ENCODE measurements at regions of chr12 and their contacts with region 1.

Region 1: GRCh38 chr12:92408072-92408900 is 262.6 kb upstream of the BTG1 start:
- DNase-seq: peak; percentile 74
- ATAC-seq: peak; percentile 24
- H3K4me3 Mint-ChIP-seq: no peak overlapping the region
- H3K27ac Mint-ChIP-seq: no peak overlapping the region
- H3K4me1 Mint-ChIP-seq: peaks cover 46% of the 10 kb centered on the region
- H3K27me3 Mint-ChIP-seq: no peaks in the 10 kb centered on the region

Region 2: DNA sequence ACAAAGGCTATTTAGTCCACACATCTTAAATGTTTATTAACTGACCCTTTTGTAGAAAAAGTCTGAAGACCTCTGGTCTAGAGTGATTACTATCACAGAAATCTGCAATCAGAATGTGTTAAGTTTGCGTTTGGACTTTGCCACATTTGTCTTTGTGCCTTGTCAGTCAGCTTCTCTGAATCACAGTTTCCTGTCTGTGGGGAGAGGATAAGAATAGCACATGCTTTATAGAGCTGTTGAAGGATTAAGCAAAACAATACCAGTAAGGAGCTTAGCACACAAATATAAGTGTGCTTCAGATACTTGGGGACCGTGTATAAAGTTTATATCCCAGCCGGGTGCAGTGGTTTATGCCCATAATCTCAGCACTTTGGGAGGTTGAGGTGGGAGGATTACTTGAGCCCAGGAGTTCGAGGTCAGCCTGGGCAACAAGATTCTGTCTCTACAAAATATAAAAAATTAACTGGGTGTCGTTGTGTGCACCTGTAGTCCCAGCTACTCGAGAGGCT is 199.6 kb before region 1 on chr12:
- CTCF ChIA-PET with region 1: interaction called, 21 read pairs
- POLR2A ChIA-PET with region 1: interaction called, 5 read pairs
- DNase-seq: peak; percentile 60
- ATAC-seq: peak; percentile 89
- H3K4me3 Mint-ChIP-seq: peak overlapping the region; percentile 51
- H3K27ac Mint-ChIP-seq: peak overlapping the region; percentile 93
- H3K4me1 Mint-ChIP-seq: peaks cover 41% of the 10 kb centered on the region
- H3K27me3 Mint-ChIP-seq: no peaks in the 10 kb centered on the region

Region 3: GRCh38 chr12:92363295-92364146 is 44.8 kb before region 1 on chr12:
- CTCF ChIA-PET with region 1: interaction called, 13 read pairs
- POLR2A ChIA-PET with region 1: interaction called, 25 read pairs
- DNase-seq: peak; percentile 52
- ATAC-seq: peak; percentile 78
- H3K4me3 Mint-ChIP-seq: peak overlapping the region; percentile 72
- H3K27ac Mint-ChIP-seq: peak overlapping the region; percentile 84
- H3K4me1 Mint-ChIP-seq: peaks cover 48% of the 10 kb centered on the region
- H3K27me3 Mint-ChIP-seq: no peaks in the 10 kb centered on the region

Region 4: DNA sequence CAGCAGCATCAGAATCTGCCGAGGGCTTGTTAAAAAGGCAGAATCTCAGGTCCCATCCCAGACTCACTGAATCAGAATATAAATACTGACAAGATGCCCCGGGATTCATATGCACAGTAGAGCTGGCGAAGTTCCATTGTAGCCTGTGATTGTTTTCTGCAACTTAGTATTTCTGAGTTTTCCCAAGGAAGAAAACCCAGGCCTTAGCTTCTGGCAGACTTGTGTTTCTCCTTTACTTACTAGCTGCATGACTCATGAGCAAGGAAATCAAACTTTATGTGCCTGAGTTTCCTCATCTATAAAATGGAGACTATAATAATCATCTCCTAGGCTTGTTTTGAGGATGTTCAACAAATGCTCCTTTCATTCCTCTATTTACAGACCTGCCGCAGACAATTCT is 16.1 kb after region 1 on chr12:
- CTCF ChIA-PET with region 1: interaction called, 10 read pairs
- POLR2A ChIA-PET with region 1: no interaction called
- DNase-seq: no peak
- ATAC-seq: no peak
- H3K4me3 Mint-ChIP-seq: no peak overlapping the region
- H3K27ac Mint-ChIP-seq: no peak overlapping the region
- H3K4me1 Mint-ChIP-seq: peaks cover 3% of the 10 kb centered on the region
- H3K27me3 Mint-ChIP-seq: no peaks in the 10 kb centered on the region

Region 5: GRCh38 chr12:92505254-92506231 is 97.3 kb after region 1 on chr12:
- CTCF ChIA-PET with region 1: interaction called, 32 read pairs
- POLR2A ChIA-PET with region 1: interaction called, 6 read pairs
- DNase-seq: peak; percentile 56
- ATAC-seq: peak; percentile 70
- H3K4me3 Mint-ChIP-seq: peak overlapping the region; percentile 69
- H3K27ac Mint-ChIP-seq: peak overlapping the region; percentile 92
- H3K4me1 Mint-ChIP-seq: peaks cover 44% of the 10 kb centered on the region
- H3K27me3 Mint-ChIP-seq: no peaks in the 10 kb centered on the region

Region 6: DNA sequence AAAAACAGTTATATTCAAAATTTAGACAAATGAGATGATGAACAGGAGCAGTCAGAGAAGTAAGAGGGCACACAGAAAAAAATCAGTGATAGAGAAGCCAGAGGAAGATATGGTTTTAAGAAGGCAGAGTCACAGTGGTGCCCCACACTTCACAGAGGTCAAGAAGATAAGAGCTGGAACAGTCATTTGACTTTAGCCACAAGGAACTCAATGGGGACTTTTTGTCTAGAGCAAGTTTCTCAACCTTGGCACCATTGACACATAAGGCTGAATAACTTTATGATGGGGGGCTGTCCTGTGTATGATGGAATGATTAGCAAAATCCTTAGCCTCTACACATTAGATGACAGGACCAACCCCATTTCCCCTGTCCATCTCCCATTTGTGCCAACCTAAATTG is 121.7 kb after region 1 on chr12:
- CTCF ChIA-PET with region 1: no interaction called
- POLR2A ChIA-PET with region 1: no interaction called
- DNase-seq: no peak
- ATAC-seq: no peak
- H3K4me3 Mint-ChIP-seq: no peak overlapping the region
- H3K27ac Mint-ChIP-seq: no peak overlapping the region
- H3K4me1 Mint-ChIP-seq: peaks cover 10% of the 10 kb centered on the region
- H3K27me3 Mint-ChIP-seq: no peaks in the 10 kb centered on the region

Region 7: DNA sequence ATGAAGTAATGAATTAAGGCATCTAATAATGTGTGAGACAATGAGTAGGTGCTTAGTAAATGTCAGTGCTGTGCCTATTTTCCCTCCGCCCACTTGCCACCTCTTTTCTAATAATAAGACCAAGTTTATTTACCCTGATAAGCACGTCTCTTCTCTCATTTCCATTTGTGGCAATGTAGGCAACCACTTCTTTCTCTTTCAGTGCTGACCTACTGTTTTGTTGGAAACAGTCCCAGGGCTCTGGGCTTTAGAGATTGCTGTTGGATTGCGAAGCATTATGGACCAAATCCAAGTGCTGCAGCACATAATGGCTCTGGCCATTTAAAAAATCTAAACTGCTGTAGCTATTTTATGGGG is 153.2 kb after region 1 on chr12:
- CTCF ChIA-PET with region 1: interaction called, 10 read pairs
- POLR2A ChIA-PET with region 1: no interaction called
- DNase-seq: no peak
- ATAC-seq: no peak
- H3K4me3 Mint-ChIP-seq: no peak overlapping the region
- H3K27ac Mint-ChIP-seq: no peak overlapping the region
- H3K4me1 Mint-ChIP-seq: peaks cover 20% of the 10 kb centered on the region
- H3K27me3 Mint-ChIP-seq: no peaks in the 10 kb centered on the region

Region 8: GRCh38 chr12:92675085-92675865 is 267.0 kb after region 1 on chr12:
- CTCF ChIA-PET with region 1: no interaction called
- POLR2A ChIA-PET with region 1: no interaction called
- DNase-seq: no peak
- ATAC-seq: no peak
- H3K4me3 Mint-ChIP-seq: no peak overlapping the region
- H3K27ac Mint-ChIP-seq: no peak overlapping the region
- H3K4me1 Mint-ChIP-seq: no peaks in the 10 kb centered on the region
- H3K27me3 Mint-ChIP-seq: no peaks in the 10 kb centered on the region